B cell (primary cell): ENCODE measurements at regions of chr5 and their contacts with region 1.

Region 1: DNA sequence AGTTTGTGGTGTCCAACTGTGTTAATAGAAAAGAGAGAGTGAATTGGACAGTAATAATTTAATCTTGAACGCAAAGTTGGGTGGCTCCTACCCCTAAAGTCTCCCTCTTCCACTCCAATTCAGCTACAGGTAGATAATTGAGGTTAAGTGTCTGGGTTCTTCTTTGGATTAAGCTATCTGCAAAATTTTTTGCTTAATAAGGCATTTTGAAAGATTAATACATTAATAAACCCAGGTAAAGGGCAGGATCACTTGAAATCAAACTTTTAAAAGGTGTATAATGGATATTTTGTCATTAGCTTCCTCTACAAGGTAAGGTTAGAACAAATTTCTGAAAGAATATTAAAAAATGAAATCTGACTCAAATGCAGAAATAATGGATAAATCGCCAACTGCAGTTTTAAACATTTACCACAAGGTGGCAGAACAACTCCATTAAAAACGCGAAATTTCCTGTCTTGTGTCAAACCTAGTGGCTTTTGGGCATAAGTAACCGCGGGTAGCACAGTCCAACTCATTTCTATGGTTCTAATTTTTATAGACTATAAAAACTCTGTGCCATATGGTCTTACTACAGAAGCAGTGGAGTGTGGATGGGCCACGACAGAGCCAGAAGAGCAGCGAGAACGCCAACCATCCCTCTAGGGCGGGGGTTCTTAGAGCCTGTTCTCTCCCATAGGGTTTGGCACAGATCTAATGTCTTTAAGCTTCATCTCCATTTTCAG is 276.5 kb downstream of the ARHGEF28 start:
- DNase-seq: peak; percentile 64
- ATAC-seq: no peak
- H3K4me3 ChIP-seq: no peak overlapping the region
- H3K4me3 Mint-ChIP-seq: no peak overlapping the region
- H3K27ac ChIP-seq: no peak overlapping the region
- H3K27ac Mint-ChIP-seq: no peak overlapping the region
- H3K4me1 ChIP-seq: no peaks in the 10 kb centered on the region
- H3K4me1 Mint-ChIP-seq: no peaks in the 10 kb centered on the region
- H3K27me3 ChIP-seq: peaks cover 0 to 5% (median 0%) of the 10 kb centered on the region in 4 experiments
- H3K27me3 Mint-ChIP-seq: peaks cover 42% of the 10 kb centered on the region
- CTCF ChIP-seq: peak; percentile 94

Region 2: GRCh38 chr5:73591102-73591695 is 311.3 kb before region 1 on chr5:
- CTCF ChIA-PET with region 1: interaction called, 3 read pairs
- POLR2A ChIA-PET with region 1: no interaction called
- intact Hi-C with region 1: loop called (anchors 10 kb)
- DNase-seq: peak; percentile 74
- ATAC-seq: peak; percentile 54
- H3K4me3 ChIP-seq: no peak overlapping the region
- H3K4me3 Mint-ChIP-seq: no peak overlapping the region
- H3K27ac ChIP-seq: no peak overlapping the region
- H3K27ac Mint-ChIP-seq: no peak overlapping the region
- H3K4me1 ChIP-seq: no peaks in the 10 kb centered on the region
- H3K4me1 Mint-ChIP-seq: no peaks in the 10 kb centered on the region
- H3K27me3 ChIP-seq: no peaks in the 10 kb centered on the region
- H3K27me3 Mint-ChIP-seq: no peaks in the 10 kb centered on the region
- CTCF ChIP-seq: peak; percentile 88

Region 3: DNA sequence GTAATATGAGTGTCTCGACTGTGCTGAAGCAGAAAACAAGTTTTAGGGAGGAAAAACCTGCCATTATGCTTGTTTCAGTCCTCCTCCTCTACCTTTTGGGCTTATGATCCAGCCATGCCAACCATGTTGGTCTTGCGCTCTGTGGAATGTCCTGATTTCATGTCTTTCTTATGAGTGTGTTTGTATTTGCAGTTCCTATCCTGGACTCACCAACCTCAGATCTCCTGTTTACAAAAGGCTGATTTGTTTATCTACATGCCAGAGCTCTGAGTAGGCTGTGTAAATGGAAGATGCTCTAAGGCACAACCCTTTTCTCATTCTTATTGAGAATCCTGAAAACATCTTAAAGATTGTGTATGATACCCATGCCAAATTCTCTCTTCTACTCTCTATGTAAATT is 137.9 kb before region 1 on chr5:
- CTCF ChIA-PET with region 1: no interaction called
- POLR2A ChIA-PET with region 1: no interaction called
- intact Hi-C with region 1: no loop called
- DNase-seq: no peak
- ATAC-seq: no peak
- H3K4me3 ChIP-seq: no peak overlapping the region
- H3K4me3 Mint-ChIP-seq: no peak overlapping the region
- H3K27ac ChIP-seq: no peak overlapping the region
- H3K27ac Mint-ChIP-seq: no peak overlapping the region
- H3K4me1 ChIP-seq: no peaks in the 10 kb centered on the region
- H3K4me1 Mint-ChIP-seq: no peaks in the 10 kb centered on the region
- H3K27me3 ChIP-seq: no peaks in the 10 kb centered on the region
- H3K27me3 Mint-ChIP-seq: no peaks in the 10 kb centered on the region
- CTCF ChIP-seq: no peak

Region 4: GRCh38 chr5:73867345-73868335 is 34.8 kb before region 1 on chr5:
- CTCF ChIA-PET with region 1: no interaction called
- POLR2A ChIA-PET with region 1: no interaction called
- intact Hi-C with region 1: no loop called
- DNase-seq: no peak
- ATAC-seq: no peak
- H3K4me3 ChIP-seq: no peak overlapping the region
- H3K4me3 Mint-ChIP-seq: no peak overlapping the region
- H3K27ac ChIP-seq: no peak overlapping the region
- H3K27ac Mint-ChIP-seq: no peak overlapping the region
- H3K4me1 ChIP-seq: no peaks in the 10 kb centered on the region
- H3K4me1 Mint-ChIP-seq: no peaks in the 10 kb centered on the region
- H3K27me3 ChIP-seq: peaks cover 0 to 3% (median 0%) of the 10 kb centered on the region in 4 experiments
- H3K27me3 Mint-ChIP-seq: peaks cover 21% of the 10 kb centered on the region
- CTCF ChIP-seq: no peak

Region 5: DNA sequence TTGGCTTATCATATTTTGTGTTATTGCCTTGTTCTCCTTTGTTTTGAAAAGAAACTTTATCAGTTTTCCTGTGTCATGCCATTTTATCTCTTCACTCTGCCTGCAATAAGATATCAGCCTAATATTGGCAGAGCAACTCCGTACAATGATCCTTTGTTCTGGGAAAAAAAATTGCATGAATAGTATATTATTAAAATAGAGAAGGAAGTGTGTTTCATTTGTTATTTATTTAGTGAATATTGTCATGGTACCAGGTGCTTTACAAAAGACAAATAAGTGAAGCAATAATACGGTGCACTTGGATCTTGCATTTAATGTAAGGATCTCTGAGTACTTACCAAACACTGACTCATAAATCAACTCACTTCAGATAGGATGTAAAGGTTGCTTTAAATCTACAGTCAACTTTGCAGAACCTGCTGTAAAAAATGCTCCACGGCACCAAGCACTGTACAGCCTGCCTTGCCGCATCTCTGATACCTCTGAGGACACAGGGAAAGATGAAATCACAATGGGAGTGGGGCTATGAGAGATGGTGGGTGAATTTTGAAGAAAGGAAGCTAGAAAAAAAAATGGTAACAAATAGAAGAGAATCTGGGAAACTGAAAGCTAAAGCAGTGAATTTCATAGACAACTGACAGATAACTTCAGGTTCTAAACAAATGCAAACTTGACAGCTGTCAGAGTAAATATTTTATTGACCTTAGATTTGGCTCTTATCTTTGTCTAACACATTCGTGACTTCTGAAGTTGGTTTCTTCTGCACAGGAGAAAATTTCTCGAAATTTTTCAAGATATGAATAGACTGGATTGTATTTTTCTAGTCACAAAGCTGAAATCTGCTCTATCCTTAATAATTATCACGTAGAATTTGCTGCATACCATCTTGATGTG is 505.9 kb after region 1 on chr5:
- CTCF ChIA-PET with region 1: no interaction called
- POLR2A ChIA-PET with region 1: no interaction called
- intact Hi-C with region 1: loop called (anchors 10 kb)
- DNase-seq: no peak
- ATAC-seq: no peak
- H3K4me3 ChIP-seq: no peak overlapping the region
- H3K4me3 Mint-ChIP-seq: no peak overlapping the region
- H3K27ac ChIP-seq: no peak overlapping the region
- H3K27ac Mint-ChIP-seq: no peak overlapping the region
- H3K4me1 ChIP-seq: no peaks in the 10 kb centered on the region
- H3K4me1 Mint-ChIP-seq: no peaks in the 10 kb centered on the region
- H3K27me3 ChIP-seq: peaks cover 0 to 4% (median 0%) of the 10 kb centered on the region in 4 experiments
- H3K27me3 Mint-ChIP-seq: peaks cover 21% of the 10 kb centered on the region
- CTCF ChIP-seq: no peak

Region 6: GRCh38 chr5:74919487-74919886 is 1017.0 kb after region 1 on chr5:
- CTCF ChIA-PET with region 1: no interaction called
- POLR2A ChIA-PET with region 1: no interaction called
- intact Hi-C with region 1: loop called (anchors 10 kb)
- DNase-seq: peak; percentile 27
- ATAC-seq: no peak
- H3K4me3 ChIP-seq: no peak overlapping the region
- H3K4me3 Mint-ChIP-seq: no peak overlapping the region
- H3K27ac ChIP-seq: no peak overlapping the region
- H3K27ac Mint-ChIP-seq: no peak overlapping the region
- H3K4me1 ChIP-seq: no peaks in the 10 kb centered on the region
- H3K4me1 Mint-ChIP-seq: no peaks in the 10 kb centered on the region
- H3K27me3 ChIP-seq: peaks cover 0 to 5% (median 0%) of the 10 kb centered on the region in 4 experiments
- H3K27me3 Mint-ChIP-seq: peaks cover 9% of the 10 kb centered on the region
- CTCF ChIP-seq: peak; percentile 45